Activated naive CD4-positive, alpha-beta T cell treated with anti-CD3 and anti-CD28 coated beads for 36 hours (primary cell): ENCODE measurements at regions of chr2 and their contacts with region 1.

Region 1: DNA sequence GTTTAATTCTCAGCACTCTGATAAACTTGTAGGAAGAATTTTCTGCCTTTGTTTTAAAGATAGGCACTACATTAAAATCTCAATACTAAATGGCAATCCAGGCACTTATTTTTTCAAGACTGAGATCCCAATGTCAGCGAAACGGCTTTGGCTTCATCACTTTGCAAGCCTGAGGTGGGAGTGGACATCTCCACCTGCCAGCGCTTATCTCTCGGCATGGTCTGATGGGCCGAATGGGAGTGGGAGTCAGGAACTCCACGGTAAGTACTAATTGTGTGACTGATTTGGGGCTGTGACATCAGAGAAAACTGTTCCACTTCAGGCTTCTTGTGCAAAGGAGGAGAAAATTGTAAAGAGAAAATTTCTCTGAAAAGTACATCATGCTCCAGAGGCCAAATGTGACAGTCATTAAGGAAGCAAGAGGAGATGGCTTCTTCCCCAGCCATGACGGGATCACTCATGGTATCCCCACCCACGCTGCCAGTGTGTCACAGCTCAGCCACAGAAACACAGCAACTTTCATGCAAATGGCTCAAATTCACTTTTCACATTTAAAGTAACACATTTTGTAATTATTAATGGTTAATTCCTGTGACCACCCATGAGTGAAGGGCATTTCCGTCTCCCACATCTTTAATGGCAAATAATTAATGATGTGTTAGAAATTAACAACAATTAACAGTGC is 385.5 kb upstream of the HNRNPA3 start:
- DNase-seq: peak; percentile 61
- H3K4me3 Mint-ChIP-seq: no peak overlapping the region
- H3K27ac Mint-ChIP-seq: peak overlapping the region; percentile 74
- H3K4me1 Mint-ChIP-seq: peaks cover 39% of the 10 kb centered on the region
- H3K27me3 Mint-ChIP-seq: no peaks in the 10 kb centered on the region

Region 2: DNA sequence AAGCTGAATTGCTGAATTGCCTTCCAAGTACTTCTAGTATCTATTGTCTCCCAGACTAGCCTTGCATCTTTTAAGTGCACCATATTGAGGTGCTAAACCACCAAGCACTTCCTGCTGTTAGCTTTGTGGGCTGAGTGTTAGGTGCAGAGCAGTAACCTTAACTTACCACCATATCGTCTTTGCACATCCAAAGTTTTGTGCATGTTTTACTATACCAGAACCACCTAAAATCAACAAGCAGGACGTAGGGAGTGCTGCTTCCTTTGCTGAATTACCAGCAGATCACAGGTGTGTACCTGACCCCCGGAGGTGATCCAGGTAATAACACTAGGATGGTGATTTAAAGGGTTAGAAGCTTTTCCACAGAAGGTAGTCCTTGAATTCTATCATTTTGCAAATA is 25.5 kb after region 1 on chr2:
- CTCF ChIA-PET with region 1: no interaction called
- intact Hi-C with region 1: loop called (anchors 1 kb)
- DNase-seq: peak; percentile 28
- H3K4me3 Mint-ChIP-seq: no peak overlapping the region
- H3K27ac Mint-ChIP-seq: no peak overlapping the region
- H3K4me1 Mint-ChIP-seq: peaks cover 29% of the 10 kb centered on the region
- H3K27me3 Mint-ChIP-seq: no peaks in the 10 kb centered on the region

Region 3: GRCh38 chr2:176931588-176932563 is 104.8 kb after region 1 on chr2:
- CTCF ChIA-PET with region 1: no interaction called
- intact Hi-C with region 1: loop called (anchors 1 kb)
- DNase-seq: peak; percentile 23
- H3K4me3 Mint-ChIP-seq: no peak overlapping the region
- H3K27ac Mint-ChIP-seq: no peak overlapping the region
- H3K4me1 Mint-ChIP-seq: peaks cover 10% of the 10 kb centered on the region
- H3K27me3 Mint-ChIP-seq: peaks cover 8% of the 10 kb centered on the region